ENCODE measurements at regions of chr10 and their contacts with region 1.

Region 1: DNA sequence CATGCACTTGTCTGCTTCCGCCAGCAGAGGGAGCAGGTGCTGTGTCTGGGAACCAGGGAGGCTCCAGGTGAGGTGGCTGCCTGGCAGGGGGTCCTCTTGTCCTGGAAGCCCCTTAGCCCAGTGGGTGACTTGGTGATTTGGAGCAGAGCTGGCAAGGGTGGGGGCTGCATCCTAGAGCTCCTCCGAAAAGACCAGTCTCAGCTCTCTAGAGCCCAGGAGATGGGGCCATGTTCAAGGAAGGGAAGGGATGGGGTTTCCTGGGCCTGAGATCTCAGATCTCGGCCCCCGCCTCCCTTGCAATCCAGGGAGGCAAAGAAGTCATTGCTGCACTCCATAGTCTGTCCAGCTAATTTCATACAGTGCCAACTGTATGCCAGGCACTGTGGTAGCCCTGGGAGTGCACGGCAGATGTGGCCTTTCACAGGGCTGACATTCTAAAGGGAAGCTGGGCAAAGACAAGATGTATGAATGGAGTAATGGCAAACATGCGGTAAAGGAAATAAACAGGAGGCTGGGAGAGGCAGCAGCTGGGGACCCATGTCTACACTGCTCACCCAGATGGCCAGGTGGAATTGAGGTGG is 20.4 kb upstream of the SFRP5 start:
- DNase-seq: peak; percentile 80
- ATAC-seq: peak; percentile 77
- H3K4me3 Mint-ChIP-seq: no peak overlapping the region
- H3K27ac Mint-ChIP-seq: peak overlapping the region; percentile 58
- H3K4me1 Mint-ChIP-seq: peaks cover 16% of the 10 kb centered on the region
- H3K27me3 Mint-ChIP-seq: no peaks in the 10 kb centered on the region
- CTCF ChIP-seq: peak; percentile 96

Region 2: GRCh38 chr10:97805096-97805884 is 13.1 kb after region 1 on chr10:
- CTCF ChIA-PET with region 1: interaction called, 39 read pairs
- POLR2A ChIA-PET with region 1: no interaction called
- intact Hi-C with region 1: no loop called
- DNase-seq: no peak
- ATAC-seq: no peak
- H3K4me3 Mint-ChIP-seq: no peak overlapping the region
- H3K27ac Mint-ChIP-seq: no peak overlapping the region
- H3K4me1 Mint-ChIP-seq: no peaks in the 10 kb centered on the region
- H3K27me3 Mint-ChIP-seq: no peaks in the 10 kb centered on the region
- CTCF ChIP-seq: no peak

Region 3: DNA sequence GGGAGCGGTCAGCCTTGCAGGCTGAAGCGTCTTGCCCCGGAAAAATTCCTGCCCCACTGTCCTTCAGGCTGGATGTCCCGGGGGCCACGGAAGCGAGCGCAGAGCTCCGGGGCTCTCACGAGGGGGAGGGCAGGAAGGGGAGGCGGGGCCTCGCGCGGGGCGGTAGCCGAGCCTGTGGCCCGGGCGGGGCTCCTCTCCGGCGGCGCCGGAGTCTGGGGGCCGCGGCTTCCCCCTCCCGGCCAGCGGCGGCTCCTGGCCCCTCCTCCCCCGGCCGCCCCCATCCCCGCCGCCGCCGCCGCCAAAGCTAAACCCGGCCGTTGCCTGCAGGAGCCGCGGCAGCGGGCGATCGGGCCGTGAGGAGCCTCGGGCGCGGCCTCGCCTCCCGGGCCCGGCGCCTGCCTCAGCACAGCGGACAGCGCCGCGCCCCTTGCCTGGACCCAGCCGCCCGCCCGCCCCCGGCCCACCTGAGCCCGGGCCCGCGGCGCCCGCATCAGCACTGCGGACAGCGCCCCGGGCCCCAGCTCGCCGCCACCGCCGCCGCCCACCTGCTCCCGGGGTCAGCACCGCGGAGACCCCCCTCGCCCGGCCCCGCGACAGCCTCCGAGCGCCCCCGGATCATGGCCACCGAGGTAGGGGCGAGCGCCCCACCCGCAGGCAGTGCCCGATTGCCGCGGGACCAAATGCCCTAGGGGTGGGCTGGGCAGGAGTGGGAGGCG is 57.6 kb after region 1 on chr10 and contains the start of gene GOLGA7B:
- CTCF ChIA-PET with region 1: interaction called, 15 read pairs
- POLR2A ChIA-PET with region 1: interaction called, 3 read pairs
- intact Hi-C with region 1: loop called (anchors 5 kb)
- DNase-seq: peak; percentile 70
- ATAC-seq: peak; percentile 81
- H3K4me3 Mint-ChIP-seq: peak within 1 kb of the TSS; percentile 74
- H3K27ac Mint-ChIP-seq: peak within 1 kb of the TSS; percentile 43
- H3K4me1 Mint-ChIP-seq: peaks cover 37% of the 10 kb centered on the region
- H3K27me3 Mint-ChIP-seq: no peaks in the 10 kb centered on the region
- CTCF ChIP-seq: no peak
- total RNA-seq, gene GOLGA7B: 0.92 to 1.1 TPM

Region 4: DNA sequence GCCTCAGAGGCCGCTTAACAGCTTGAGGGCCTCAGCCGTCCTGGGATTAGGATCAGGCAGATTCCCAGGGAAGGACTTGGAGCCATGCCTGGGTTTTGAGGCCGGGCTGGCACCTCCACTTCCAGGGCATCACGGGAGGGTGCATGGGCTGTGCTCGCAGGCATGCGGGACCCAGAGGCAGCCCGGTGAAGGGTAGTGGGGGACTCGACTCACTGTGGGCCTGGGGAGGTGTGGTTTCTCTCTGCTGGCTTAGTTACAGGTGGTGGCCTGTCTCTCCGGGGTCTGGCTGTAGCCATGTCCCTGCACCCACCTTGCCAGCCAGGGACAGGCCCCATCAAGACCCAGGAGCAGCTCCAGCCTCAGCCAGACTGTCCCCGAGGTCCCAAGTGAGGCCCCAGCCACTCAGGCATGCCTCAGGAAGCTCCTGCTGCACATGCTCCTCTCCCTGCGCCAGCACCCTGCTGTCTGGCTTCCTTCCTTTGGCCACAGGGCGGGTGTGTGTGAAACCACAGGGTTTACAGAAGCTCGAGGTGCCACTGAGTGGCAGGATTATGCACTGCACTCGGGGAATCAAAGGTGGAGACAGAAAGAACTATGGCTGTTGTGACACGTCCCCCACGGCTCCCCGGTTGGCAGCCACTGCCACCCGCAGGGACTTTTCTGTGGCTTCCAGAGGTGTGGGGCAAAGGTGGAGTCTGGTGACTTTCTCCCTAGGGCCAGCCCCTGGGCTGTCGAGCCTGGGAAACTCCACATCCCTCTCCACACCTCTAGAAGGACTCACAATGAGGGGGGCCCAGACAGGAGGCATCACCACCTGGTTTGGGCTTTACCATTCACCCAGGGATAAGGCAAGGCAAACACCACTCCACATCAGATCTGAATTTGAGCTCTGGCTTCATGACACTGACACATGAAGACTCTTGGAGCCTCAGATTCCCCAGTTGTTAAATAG is 77.1 kb after region 1 on chr10:
- CTCF ChIA-PET with region 1: interaction called, 232 read pairs
- POLR2A ChIA-PET with region 1: interaction called, 6 read pairs
- intact Hi-C with region 1: loop called (anchors 2 kb)
- DNase-seq: peak; percentile 95
- ATAC-seq: peak; percentile 100
- H3K4me3 Mint-ChIP-seq: peak overlapping the region; percentile 31
- H3K27ac Mint-ChIP-seq: peak overlapping the region; percentile 80
- H3K4me1 Mint-ChIP-seq: peaks cover 13% of the 10 kb centered on the region
- H3K27me3 Mint-ChIP-seq: no peaks in the 10 kb centered on the region
- CTCF ChIP-seq: peak; percentile 91